ENCODE measurements at regions of chr7 and their contacts with region 1.

Region 1: GRCh38 chr7:74083117-74083876 is at the start of gene LIMK1:
- DNase-seq: peak; percentile 68
- H3K4me3 Mint-ChIP-seq: peak within 1 kb of the TSS; percentile 78
- H3K27ac Mint-ChIP-seq: peak within 1 kb of the TSS; percentile 89
- H3K4me1 Mint-ChIP-seq: peaks cover 21% of the 10 kb centered on the region
- H3K27me3 Mint-ChIP-seq: no peaks in the 10 kb centered on the region
- CTCF ChIP-seq: no peak
- total RNA-seq, gene LIMK1: 21.4 and 23.4 TPM in 2 replicates

Region 2: DNA sequence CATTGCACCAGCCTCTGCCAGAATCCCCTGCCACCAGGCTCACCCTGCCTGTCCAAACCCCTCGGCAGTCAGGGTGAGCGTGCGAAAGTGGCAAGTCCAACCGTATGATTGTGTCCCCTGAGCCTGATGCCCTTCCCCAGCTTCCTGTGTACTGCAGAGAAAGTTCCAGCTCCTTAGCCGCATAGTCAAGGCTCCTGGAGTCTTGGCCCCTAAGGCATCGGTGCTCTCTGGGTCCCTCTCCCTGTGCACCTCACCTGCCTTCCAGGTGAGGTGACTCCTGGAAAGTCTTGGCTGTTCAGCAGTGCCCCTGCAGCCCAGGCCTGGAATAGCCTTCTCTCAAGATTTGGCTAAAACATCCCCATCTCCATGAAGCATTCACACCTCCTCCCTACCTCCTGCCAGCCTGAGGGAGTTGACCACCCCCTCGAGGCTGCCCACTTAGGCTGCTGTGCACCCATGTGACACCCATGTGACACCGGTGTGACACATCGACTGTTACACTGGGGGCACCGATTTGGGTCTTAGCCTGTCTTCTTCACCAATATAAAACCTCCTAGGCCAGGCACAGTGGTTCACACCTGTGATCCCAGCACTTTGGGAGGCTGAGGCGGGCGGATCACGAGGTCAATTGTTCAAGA is 111.5 kb before region 1 on chr7:
- CTCF ChIA-PET with region 1: no interaction called
- POLR2A ChIA-PET with region 1: no interaction called
- intact Hi-C with region 1: no loop called
- DNase-seq: peak; percentile 36
- H3K4me3 Mint-ChIP-seq: no peak overlapping the region
- H3K27ac Mint-ChIP-seq: peak overlapping the region; percentile 16
- H3K4me1 Mint-ChIP-seq: no peaks in the 10 kb centered on the region
- H3K27me3 Mint-ChIP-seq: peaks cover 14% of the 10 kb centered on the region
- CTCF ChIP-seq: peak; percentile 8

Region 3: DNA sequence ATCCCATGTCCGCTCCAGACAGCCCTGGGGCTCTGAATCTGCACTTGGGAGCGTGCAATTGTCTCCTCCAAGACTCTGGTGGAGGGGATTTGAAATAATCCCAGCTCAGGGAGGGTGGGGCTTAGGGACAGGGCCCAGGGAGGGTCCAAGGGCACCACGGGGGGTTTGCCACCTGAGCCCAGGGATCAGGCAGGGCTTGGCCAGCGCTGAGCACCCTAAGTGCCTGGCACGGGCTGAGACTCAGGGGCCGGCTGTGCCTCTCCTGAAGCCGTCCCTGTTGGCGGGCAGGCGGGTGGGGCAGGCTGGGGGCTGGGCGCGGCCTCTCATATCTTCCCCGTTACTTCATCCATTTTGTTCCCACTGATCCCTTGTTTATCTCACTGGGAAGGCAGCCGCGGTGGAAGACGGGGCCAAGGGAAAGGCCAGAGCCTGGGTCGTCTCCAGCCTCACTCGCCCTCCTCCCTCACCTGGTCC is 97.1 kb before region 1 on chr7:
- CTCF ChIA-PET with region 1: no interaction called
- POLR2A ChIA-PET with region 1: no interaction called
- intact Hi-C with region 1: no loop called
- DNase-seq: no peak
- H3K4me3 Mint-ChIP-seq: no peak overlapping the region
- H3K27ac Mint-ChIP-seq: no peak overlapping the region
- H3K4me1 Mint-ChIP-seq: no peaks in the 10 kb centered on the region
- H3K27me3 Mint-ChIP-seq: peaks cover 21% of the 10 kb centered on the region
- CTCF ChIP-seq: no peak

Region 4: DNA sequence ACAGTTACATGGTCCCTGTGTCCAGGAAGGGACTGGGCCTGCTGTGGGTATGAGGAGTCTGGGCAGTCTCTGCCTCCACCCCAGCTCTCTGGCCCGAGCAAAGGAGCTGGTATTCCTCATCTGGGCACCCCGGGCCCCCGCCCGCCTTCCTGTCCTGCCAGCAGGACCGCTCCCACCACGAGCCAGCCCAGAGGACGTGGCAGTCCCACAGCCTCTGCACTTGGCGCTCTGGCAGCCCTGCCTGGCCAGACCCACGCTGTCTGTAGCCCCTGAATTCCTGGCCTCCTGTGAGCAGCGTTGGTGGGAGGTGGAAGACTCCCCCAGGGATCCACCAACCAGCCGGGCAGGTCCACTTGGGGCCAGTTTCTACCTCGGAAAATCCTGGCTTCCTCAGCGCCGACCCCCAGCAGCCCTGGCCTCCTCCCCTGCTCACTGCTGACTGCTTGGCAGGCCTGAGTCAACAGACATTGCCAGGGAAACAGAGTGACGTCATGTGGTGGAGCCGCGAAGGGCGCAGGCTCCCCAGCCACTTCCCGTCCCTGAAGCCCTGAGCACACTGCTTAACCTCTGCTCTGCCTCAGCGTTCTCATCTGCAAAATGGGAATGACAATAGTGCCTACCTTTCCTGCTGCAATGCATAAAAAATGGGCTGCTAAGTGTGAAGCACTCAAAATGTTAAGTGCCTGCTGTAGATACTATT is 21.3 kb before region 1 on chr7:
- CTCF ChIA-PET with region 1: interaction called, 5 read pairs
- POLR2A ChIA-PET with region 1: interaction called, 12 read pairs
- intact Hi-C with region 1: no loop called
- DNase-seq: peak; percentile 80
- H3K4me3 Mint-ChIP-seq: peak overlapping the region; percentile 42
- H3K27ac Mint-ChIP-seq: peak overlapping the region; percentile 89
- H3K4me1 Mint-ChIP-seq: peaks cover 24% of the 10 kb centered on the region
- H3K27me3 Mint-ChIP-seq: peaks cover 14% of the 10 kb centered on the region
- CTCF ChIP-seq: no peak